Breast epithelium (tissue), 4 donors: ENCODE measurements at regions of chr12 and their contacts with region 1.

Region 1: GRCh38 chr12:25958428-25959070 is at the start of gene RASSF8:
- DNase-seq: peak; percentile 39 to 53
- H3K4me3 ChIP-seq: peak within 1 kb of the TSS; percentile 75 to 92 (median 83)
- H3K27ac ChIP-seq: peak within 1 kb of the TSS; percentile 89 to 98
- H3K4me1 ChIP-seq: no peaks in the 10 kb centered on the region
- H3K27me3 ChIP-seq: no peaks in the 10 kb centered on the region
- CTCF ChIP-seq: no peak
- POLR2A ChIP-seq: no peak
- total RNA-seq, gene RASSF8: 42.6 to 52.1 (median 47.5) TPM

Region 2: GRCh38 chr12:26032719-26033241 is 74.2 kb after region 1 on chr12:
- intact Hi-C with region 1: loop called (anchors 5 kb)
- DNase-seq: no peak
- H3K4me3 ChIP-seq: no peak overlapping the region
- H3K27ac ChIP-seq: no peak overlapping the region
- H3K4me1 ChIP-seq: no peaks in the 10 kb centered on the region
- H3K27me3 ChIP-seq: no peaks in the 10 kb centered on the region
- CTCF ChIP-seq: no peak
- POLR2A ChIP-seq: no peak